ENCODE measurements at regions of chr16 and their contacts with region 1.

Region 1: GRCh38 chr16:4435337-4436067 is 9.8 kb downstream of the DNAJA3 start:
- DNase-seq: no peak
- ATAC-seq: no peak
- H3K4me3 ChIP-seq: no peak overlapping the region
- H3K27ac ChIP-seq: no peak overlapping the region
- H3K4me1 ChIP-seq: peaks cover 4% of the 10 kb centered on the region
- H3K27me3 ChIP-seq: no peaks in the 10 kb centered on the region
- CTCF ChIP-seq: no peak

Region 2: DNA sequence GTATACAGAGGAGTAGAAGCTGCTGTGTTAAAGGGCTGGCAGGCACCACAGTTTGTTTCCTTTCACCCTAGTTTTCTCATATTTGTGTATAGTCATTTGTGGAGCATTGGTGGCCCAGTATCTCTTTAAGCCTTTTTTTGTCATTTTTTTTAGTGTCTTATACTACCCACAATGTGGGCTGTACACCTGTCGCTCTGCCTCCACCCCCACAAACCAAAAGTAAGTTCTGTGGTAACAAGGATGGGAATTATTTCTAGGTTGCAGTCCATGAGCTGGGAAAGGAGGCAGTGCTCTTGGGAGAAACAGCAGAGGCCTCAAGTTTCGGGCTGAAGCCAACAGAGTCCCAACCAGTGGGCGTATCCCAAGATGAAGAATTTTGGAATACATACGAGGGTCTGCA is 1124.0 kb before region 1 on chr16:
- intact Hi-C with region 1: no loop called
- DNase-seq: no peak
- ATAC-seq: no peak
- H3K4me3 ChIP-seq: no peak overlapping the region
- H3K27ac ChIP-seq: no peak overlapping the region
- H3K4me1 ChIP-seq: peaks cover 5% of the 10 kb centered on the region
- H3K27me3 ChIP-seq: no peaks in the 10 kb centered on the region
- CTCF ChIP-seq: no peak

Region 3: GRCh38 chr16:4461250-4462085 is 26.0 kb after region 1 on chr16:
- intact Hi-C with region 1: loop called in 1 of 2 experiments (anchors 2 kb)
- DNase-seq: no peak
- ATAC-seq: peak in 3 of 4 donors; percentile 23 to 31 (median 23)
- H3K4me3 ChIP-seq: no peak overlapping the region
- H3K27ac ChIP-seq: no peak overlapping the region
- H3K4me1 ChIP-seq: no peaks in the 10 kb centered on the region
- H3K27me3 ChIP-seq: no peaks in the 10 kb centered on the region
- CTCF ChIP-seq: no peak

Measured in psoas muscle (tissue), 8 donors.